ENCODE measurements at regions of chr14 and their contacts with region 1.

Region 1: DNA sequence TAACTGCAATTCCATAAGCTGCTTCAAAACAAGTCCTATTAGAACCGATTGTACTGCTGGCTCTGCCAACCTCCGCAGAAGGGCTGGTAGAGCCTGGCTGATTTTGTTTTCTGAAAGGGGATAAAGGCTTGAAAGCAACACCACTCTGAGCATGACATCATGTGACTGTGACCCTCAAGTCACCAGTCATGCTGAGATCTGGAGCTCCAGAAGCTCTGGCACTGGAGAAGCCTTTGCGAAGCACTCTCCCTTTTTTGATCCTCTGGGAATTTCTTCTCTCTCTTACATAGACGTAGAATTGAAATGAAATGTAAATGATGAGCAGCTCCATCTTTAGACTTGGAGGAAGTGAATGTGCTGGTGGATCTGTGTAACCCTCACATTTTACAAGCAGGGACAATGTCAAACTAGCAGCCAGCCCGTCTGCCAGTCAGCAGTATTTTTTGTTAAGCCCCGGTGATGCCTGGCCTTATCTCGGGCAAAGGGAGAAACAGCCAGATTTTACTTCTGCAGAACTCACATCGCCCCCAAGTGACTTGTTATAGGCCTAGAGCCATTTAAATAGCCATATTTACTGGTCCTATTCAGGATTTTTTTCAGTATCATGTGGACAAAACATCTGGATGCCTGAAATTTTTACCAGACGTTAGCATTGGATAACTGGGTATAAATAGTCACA is 112.1 kb upstream of the NPAS3 start:
- DNase-seq: peak; percentile 6 to 71 (median 49)
- H3K4me3 ChIP-seq: peak overlapping the region in 46 of 59 donors; percentile 0 to 57 (median 25)
- H3K27ac ChIP-seq: peak overlapping the region; percentile 70 to 98 (median 92)
- H3K27me3 ChIP-seq: no peaks in the 10 kb centered on the region
- CTCF ChIP-seq: peak in 53 of 56 donors; percentile 8 to 74 (median 50)

Region 2: GRCh38 chr14:32576088-32576795 is 250.3 kb before region 1 on chr14:
- intact Hi-C with region 1: loop called (anchors 5 kb)
- DNase-seq: peak in 9 of 10 donors; percentile 31 to 72 (median 52)
- H3K4me3 ChIP-seq: peak overlapping the region in 36 of 59 donors; percentile 3 to 56 (median 32)
- H3K27ac ChIP-seq: peak overlapping the region in 48 of 59 donors; percentile 1 to 84 (median 60)
- H3K27me3 ChIP-seq: no peaks in the 10 kb centered on the region
- CTCF ChIP-seq: peak; percentile 91 to 99 (median 97)

Region 3: DNA sequence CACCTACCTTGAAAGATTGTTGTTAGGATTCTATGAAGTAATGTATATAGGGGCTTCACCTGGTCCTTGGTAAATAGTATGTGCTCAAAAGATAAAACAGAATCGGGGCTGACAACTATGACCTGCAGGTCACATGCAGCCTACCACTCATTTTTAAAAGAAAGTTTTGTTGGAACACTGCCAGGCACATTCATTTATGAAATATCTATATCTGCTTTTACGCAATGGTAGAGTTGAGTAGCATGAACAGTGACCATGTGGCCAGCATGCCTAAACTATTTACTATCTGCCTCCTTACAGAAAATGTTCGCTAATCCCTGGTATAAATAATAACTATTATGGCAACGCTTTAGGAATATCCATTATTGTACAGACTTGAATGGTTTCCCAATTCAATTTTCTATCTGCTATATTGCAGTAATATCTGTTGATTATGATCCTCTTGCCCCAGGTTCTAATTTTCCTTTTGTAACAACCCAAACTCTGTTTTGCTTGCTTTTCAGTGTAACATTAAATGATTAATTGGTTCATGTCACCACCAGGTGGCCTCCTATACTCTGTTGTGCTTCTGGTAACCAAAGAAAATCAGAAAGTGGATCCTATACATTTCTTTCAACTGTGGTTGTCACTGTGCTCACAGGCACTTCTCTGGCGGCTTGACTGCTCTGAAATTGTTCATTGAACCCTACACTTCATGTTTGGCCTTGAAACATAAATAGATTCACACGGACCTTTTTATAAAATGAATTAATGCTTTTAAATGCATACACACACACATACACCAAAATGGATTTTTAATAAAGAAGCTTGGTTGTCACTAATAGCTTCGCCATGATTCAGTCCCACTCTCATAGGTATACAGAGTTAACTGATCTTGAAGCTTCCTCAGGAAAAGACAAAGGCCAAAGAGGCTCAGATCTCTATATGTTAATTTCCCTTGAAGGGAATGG is 115.5 kb before region 1 on chr14:
- intact Hi-C with region 1: loop called (anchors 2 to 5 kb)
- DNase-seq: peak in 3 of 10 donors; percentile 25 to 62 (median 40)
- H3K4me3 ChIP-seq: peak overlapping the region in 50 of 59 donors; percentile 0 to 56 (median 28)
- H3K27ac ChIP-seq: peak overlapping the region in 58 of 59 donors; percentile 5 to 91 (median 80)
- H3K27me3 ChIP-seq: no peaks in the 10 kb centered on the region
- CTCF ChIP-seq: peak; percentile 54 to 88 (median 72)

Region 4: GRCh38 chr14:32724867-32725471 is 101.6 kb before region 1 on chr14:
- intact Hi-C with region 1: loop called (anchors 5 kb)
- DNase-seq: peak in 2 of 10 donors; percentile 33 to 36
- H3K4me3 ChIP-seq: peak overlapping the region in 49 of 59 donors; percentile 4 to 57 (median 34)
- H3K27ac ChIP-seq: peak overlapping the region in 56 of 59 donors; percentile 3 to 95 (median 74)
- H3K27me3 ChIP-seq: no peaks in the 10 kb centered on the region
- CTCF ChIP-seq: peak in 1 of 56 donors; percentile 12